ENCODE measurements at regions of chr6 and their contacts with region 1.

Region 1: DNA sequence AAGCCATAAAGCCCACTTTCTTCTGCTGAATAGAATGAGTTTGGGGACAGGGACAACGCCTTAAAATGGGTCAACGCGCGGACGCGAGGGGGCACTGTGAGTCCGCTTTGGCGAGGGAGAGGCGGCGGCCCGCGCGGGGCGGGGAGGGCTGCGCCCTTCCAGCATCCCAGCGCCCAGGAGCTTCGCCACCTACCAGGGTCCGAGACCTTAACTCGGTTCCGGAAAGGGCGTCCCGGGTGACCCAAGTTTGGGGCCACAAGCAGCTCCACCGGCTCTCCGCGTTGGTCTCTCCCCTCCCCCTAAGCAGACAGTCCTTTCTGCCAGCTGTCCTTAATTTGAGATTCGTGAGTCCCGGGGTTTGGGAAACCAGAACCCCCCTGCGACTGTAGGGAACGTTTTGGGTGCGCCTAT is 1.8 kb upstream of the SAMD5 start:
- DNase-seq: peak; percentile 66 to 82 (median 73)
- H3K4me3 ChIP-seq: peak overlapping the region in 2 of 3 donors; percentile 78 to 89
- H3K27ac ChIP-seq: no peak overlapping the region
- H3K4me1 ChIP-seq: peaks cover 0 to 10% (median 3%) of the 10 kb centered on the region in 3 donors
- H3K27me3 ChIP-seq: no peaks in the 10 kb centered on the region
- CTCF ChIP-seq: peak; percentile 85

Region 2: DNA sequence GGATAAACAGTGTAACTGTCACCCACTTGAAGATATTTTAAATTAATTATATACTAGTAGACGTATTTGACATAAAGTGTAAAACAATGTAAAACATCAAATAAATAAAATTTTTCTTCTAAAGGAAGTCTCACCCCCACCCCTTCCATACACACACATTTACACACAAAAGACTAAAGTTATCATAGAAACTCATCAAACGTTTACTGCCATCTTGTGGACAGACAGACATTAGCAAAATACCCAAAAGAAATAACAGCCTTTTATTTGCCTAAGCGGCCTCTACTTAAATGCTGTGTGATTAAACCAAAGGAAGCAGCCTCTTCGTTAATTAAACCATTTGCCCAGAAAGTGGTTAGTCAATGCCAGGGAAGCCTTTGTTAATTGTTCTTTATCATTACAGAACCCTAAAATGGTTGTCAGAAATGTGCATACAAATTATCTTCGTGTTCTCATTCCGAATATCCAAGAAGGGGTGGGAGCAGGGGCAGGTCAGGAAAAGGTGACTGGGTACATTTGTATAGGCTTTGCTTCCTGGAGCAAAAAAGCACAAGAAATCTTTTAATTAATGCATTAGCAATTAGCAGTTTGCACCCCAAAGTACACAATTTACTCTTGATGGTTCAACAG is 659.7 kb after region 1 on chr6:
- intact Hi-C with region 1: loop called (anchors 10 kb)
- DNase-seq: peak in 2 of 5 donors; percentile 84 to 86
- H3K4me3 ChIP-seq: no peak overlapping the region
- H3K27ac ChIP-seq: no peak overlapping the region
- H3K4me1 ChIP-seq: no peaks in the 10 kb centered on the region
- H3K27me3 ChIP-seq: no peaks in the 10 kb centered on the region
- CTCF ChIP-seq: peak; percentile 65